Heart right ventricle (tissue), 16 donors: ENCODE measurements at regions of chr9 and their contacts with region 1.

Region 1: DNA sequence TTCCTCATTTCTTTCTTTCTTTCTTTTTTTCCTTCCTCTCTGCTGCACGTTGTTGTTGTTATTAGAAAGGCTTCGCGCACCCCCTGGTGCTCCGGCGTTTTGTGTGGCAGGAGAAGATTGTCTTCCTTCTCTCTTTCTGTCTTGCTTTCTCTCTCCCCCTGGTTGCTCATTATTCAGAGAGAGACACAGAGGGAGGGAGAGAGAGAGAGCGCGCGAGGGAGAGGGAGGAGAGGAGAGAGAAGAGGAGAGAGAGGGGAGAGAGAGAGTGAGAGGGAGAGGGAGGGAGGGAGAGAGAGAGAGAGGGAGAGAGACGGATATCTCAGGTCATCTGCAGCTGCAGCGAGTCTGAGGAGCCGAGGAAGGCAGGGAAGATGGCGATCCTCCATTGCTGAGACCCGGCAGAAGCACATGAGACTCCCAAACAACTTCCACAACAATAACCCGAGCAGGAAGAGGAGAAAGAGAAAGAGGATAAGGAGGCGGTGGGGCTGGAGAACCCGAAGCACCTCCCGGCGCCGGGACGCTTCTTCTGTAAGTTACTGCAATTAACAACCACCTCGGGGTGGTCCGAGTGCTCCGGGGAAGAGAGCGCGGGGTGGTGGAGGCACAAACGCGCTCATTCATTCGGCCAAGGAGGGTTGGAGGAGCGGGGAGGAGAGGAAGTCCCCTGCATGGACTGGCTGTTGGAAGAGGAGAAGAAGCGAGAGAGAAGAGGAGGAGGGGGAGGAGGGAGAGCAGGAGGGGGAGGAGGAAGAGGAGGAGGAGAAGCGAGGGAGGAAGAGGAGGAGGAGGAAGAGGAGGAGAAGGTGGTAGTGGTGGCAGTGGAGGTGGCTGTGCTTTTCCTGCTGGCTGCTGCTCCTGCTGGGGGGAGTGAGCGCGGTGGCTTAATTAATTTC is at the start of gene ZNF462:
- DNase-seq: peak; percentile 30 to 44
- ATAC-seq: peak; percentile 36 to 76 (median 51)
- H3K4me3 ChIP-seq: peak within 1 kb of the TSS; percentile 58 to 87 (median 70)
- H3K27ac ChIP-seq: peak within 1 kb of the TSS; percentile 75 to 92 (median 90)
- H3K4me1 ChIP-seq: peaks cover 2 to 45% (median 29%) of the 10 kb centered on the region in 9 donors
- H3K27me3 ChIP-seq: peaks cover 0 to 63% (median 0%) of the 10 kb centered on the region in 7 donors
- CTCF ChIP-seq: peak in 5 of 9 donors; percentile 18 to 53 (median 47)
- total RNA-seq, gene ZNF462: 24.4 to 47.7 (median 34.6) TPM

Region 2: GRCh38 chr9:105911104-105911911 is 951.8 kb before region 1 on chr9:
- intact Hi-C with region 1: loop called in 2 of 10 experiments (anchors 10 kb)
- DNase-seq: no peak
- ATAC-seq: no peak
- H3K4me3 ChIP-seq: no peak overlapping the region
- H3K27ac ChIP-seq: no peak overlapping the region
- H3K4me1 ChIP-seq: peaks cover 0 to 14% (median 0%) of the 10 kb centered on the region in 9 donors
- H3K27me3 ChIP-seq: no peaks in the 10 kb centered on the region
- CTCF ChIP-seq: no peak

Region 3: DNA sequence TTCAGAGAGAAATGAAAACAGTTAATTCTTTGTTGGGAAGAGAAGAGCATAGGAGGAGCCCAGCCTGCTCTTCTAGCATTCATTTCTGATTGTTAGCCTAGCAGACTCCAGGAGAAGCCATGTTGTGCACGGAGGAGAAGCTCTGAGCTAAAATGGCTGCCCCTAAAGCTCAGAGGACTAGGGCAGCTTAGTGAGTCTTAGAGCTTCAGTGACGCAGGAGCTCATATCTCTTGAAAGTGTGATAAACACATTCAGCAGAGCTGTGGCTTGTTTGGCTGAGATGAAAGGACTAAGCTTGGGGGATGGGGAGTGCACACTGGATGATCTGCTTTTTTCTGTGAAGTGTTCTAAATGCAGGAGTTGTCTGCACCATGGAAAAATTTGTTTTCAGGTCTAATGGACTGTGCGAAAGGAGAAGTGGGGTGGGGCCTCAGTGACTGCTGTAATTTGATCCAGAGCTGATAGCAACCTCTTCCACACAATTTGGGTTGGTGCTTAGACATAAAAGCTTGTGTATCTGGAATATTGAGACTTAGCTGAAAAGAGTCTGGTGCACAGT is 58.3 kb after region 1 on chr9:
- intact Hi-C with region 1: loop called in 7 of 10 experiments (anchors 2 to 10 kb)
- DNase-seq: peak in 1 of 2 donors; percentile 77
- ATAC-seq: peak; percentile 84 to 95 (median 91)
- H3K4me3 ChIP-seq: peak overlapping the region in 5 of 10 donors; percentile 0 to 35 (median 19)
- H3K27ac ChIP-seq: peak overlapping the region; percentile 60 to 95 (median 92)
- H3K4me1 ChIP-seq: peaks cover under 1 to 70% (median 49%) of the 10 kb centered on the region in 9 donors
- H3K27me3 ChIP-seq: no peaks in the 10 kb centered on the region
- CTCF ChIP-seq: no peak

Region 4: GRCh38 chr9:106970219-106970975 is 107.3 kb after region 1 on chr9:
- intact Hi-C with region 1: loop called in 3 of 10 experiments (anchors 10 kb)
- DNase-seq: no peak
- ATAC-seq: no peak
- H3K4me3 ChIP-seq: no peak overlapping the region
- H3K27ac ChIP-seq: no peak overlapping the region
- H3K4me1 ChIP-seq: peaks cover 0 to 38% (median 11%) of the 10 kb centered on the region in 9 donors
- H3K27me3 ChIP-seq: no peaks in the 10 kb centered on the region
- CTCF ChIP-seq: no peak